Natural killer cell (primary cell): ENCODE measurements at regions of chr19 and their contacts with region 1.

Region 1: DNA sequence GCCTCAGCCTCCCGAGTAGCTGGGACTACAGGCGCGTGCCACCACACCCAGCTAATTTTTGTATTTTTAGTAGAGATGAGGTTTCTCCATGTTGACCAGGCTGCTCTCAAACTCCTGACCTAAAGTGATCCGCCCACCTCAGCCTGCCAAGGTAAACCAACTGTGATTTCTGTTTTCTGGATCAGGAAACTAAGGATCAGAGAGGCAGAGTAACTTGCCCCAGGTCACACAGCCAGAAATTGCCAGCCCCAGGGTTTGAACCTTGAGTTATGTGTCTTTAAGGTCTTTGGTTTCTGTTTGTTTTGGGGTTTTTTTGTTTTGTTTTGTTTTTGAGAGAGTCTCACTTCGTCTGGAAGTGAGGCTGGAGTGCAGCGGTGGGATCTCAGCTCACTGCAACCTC is 4.2 kb upstream of the PLIN3 start:
- DNase-seq: no peak
- ATAC-seq: no peak
- H3K4me3 ChIP-seq: no peak overlapping the region
- H3K4me3 Mint-ChIP-seq: no peak overlapping the region
- H3K27ac ChIP-seq: no peak overlapping the region
- H3K27ac Mint-ChIP-seq: no peak overlapping the region
- H3K4me1 ChIP-seq: peaks cover 17% of the 10 kb centered on the region
- H3K4me1 Mint-ChIP-seq: peaks cover 2 to 7% of the 10 kb centered on the region in 2 donors
- H3K27me3 ChIP-seq: no peaks in the 10 kb centered on the region
- H3K27me3 Mint-ChIP-seq: no peaks in the 10 kb centered on the region
- CTCF ChIP-seq: no peak

Region 2: GRCh38 chr19:4909897-4910593 is 38.3 kb after region 1 on chr19:
- intact Hi-C with region 1: loop called (anchors 1 kb)
- DNase-seq: peak; percentile 95
- ATAC-seq: peak; percentile 92 to 95 (median 95)
- H3K4me3 ChIP-seq: peak overlapping the region; percentile 25
- H3K4me3 Mint-ChIP-seq: peak overlapping the region; percentile 88
- H3K27ac ChIP-seq: no peak overlapping the region
- H3K27ac Mint-ChIP-seq: peak overlapping the region in 1 of 2 donors; percentile 98
- H3K4me1 ChIP-seq: peaks cover 56% of the 10 kb centered on the region
- H3K4me1 Mint-ChIP-seq: peaks cover 52 to 59% of the 10 kb centered on the region in 2 donors
- H3K27me3 ChIP-seq: no peaks in the 10 kb centered on the region
- H3K27me3 Mint-ChIP-seq: no peaks in the 10 kb centered on the region
- CTCF ChIP-seq: no peak

Region 3: GRCh38 chr19:5031231-5032100 is 159.8 kb after region 1 on chr19:
- intact Hi-C with region 1: loop called (anchors 1 kb)
- DNase-seq: peak; percentile 81 to 88
- ATAC-seq: peak; percentile 86 to 96 (median 92)
- H3K4me3 ChIP-seq: no peak overlapping the region
- H3K4me3 Mint-ChIP-seq: no peak overlapping the region
- H3K27ac ChIP-seq: no peak overlapping the region
- H3K27ac Mint-ChIP-seq: no peak overlapping the region
- H3K4me1 ChIP-seq: peaks cover 10% of the 10 kb centered on the region
- H3K4me1 Mint-ChIP-seq: peaks cover 11 to 23% of the 10 kb centered on the region in 2 donors
- H3K27me3 ChIP-seq: no peaks in the 10 kb centered on the region
- H3K27me3 Mint-ChIP-seq: no peaks in the 10 kb centered on the region
- CTCF ChIP-seq: peak; percentile 94